ENCODE measurements at regions of chr3 and their contacts with region 1.

Region 1: GRCh38 chr3:148379763-148380382 is 317.8 kb upstream of the AGTR1 start:
- DNase-seq: no peak
- H3K4me3 ChIP-seq: no peak overlapping the region
- H3K27ac ChIP-seq: no peak overlapping the region
- H3K4me1 ChIP-seq: no peaks in the 10 kb centered on the region
- H3K27me3 ChIP-seq: no peaks in the 10 kb centered on the region
- CTCF ChIP-seq: peak in 2 of 3 donors; percentile 31 to 53
- EP300 ChIP-seq: no peak
- POLR2A ChIP-seq: no peak

Region 2: DNA sequence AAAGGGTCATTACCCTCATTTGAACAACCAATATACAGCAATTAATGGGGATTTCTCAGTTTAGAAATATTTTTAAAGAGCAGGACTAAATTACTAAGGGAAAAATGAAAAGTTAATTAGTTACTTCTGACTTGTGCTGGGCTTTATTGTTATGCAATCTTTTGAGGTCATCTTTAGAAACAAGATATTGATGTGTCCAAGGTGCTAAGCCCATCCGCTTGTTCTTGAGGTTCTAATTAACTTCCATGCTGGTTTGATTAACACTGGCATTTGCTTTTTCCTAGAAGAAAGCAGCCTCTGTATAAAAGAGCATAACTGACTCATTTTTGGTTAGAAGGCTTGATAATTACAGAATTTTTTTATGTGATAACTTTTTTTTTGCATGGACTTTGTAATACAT is 61.3 kb after region 1 on chr3:
- intact Hi-C with region 1: no loop called
- DNase-seq: no peak
- H3K4me3 ChIP-seq: no peak overlapping the region
- H3K27ac ChIP-seq: no peak overlapping the region
- H3K4me1 ChIP-seq: no peaks in the 10 kb centered on the region
- H3K27me3 ChIP-seq: no peaks in the 10 kb centered on the region
- CTCF ChIP-seq: no peak
- EP300 ChIP-seq: no peak
- POLR2A ChIP-seq: no peak

Region 3: GRCh38 chr3:148718982-148719862 is 339.3 kb after region 1 on chr3:
- intact Hi-C with region 1: loop called in 2 of 4 experiments (anchors 5 to 10 kb)
- DNase-seq: no peak
- H3K4me3 ChIP-seq: no peak overlapping the region
- H3K27ac ChIP-seq: no peak overlapping the region
- H3K4me1 ChIP-seq: no peaks in the 10 kb centered on the region
- H3K27me3 ChIP-seq: no peaks in the 10 kb centered on the region
- CTCF ChIP-seq: peak in 1 of 3 donors; percentile 33
- EP300 ChIP-seq: no peak
- POLR2A ChIP-seq: no peak